ENCODE measurements at regions of chr1 and their contacts with region 1.

Region 1: GRCh38 chr1:9101510-9102146 is 27.3 kb downstream of the GPR157 start:
- DNase-seq: peak; percentile 86
- CTCF ChIP-seq: peak; percentile 62

Region 2: GRCh38 chr1:8780405-8780804 is 321.2 kb before region 1 on chr1:
- in situ Hi-C with region 1: no loop called
- DNase-seq: peak; percentile 21
- CTCF ChIP-seq: no peak

Region 3: DNA sequence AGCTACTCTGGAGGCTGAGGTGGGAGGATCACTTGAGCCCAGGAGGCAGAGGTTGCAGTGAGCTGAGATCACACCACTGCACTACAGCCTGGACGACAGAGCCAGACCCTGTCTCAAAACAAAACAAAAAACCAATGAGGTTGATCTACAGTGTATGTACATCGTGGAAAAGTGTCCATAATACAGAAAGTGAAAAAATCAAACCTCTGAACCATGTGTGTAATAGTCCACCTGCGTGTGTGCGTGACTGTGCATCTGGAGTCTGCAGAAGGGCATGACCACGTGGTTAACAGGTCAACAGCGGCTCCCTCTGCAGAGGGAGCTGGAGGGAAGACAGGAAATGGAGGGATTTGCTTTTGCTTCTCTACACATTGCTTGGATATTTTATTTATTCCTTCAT is 190.7 kb before region 1 on chr1:
- in situ Hi-C with region 1: loop called (anchors 10 kb)
- DNase-seq: no peak
- CTCF ChIP-seq: no peak

Region 4: DNA sequence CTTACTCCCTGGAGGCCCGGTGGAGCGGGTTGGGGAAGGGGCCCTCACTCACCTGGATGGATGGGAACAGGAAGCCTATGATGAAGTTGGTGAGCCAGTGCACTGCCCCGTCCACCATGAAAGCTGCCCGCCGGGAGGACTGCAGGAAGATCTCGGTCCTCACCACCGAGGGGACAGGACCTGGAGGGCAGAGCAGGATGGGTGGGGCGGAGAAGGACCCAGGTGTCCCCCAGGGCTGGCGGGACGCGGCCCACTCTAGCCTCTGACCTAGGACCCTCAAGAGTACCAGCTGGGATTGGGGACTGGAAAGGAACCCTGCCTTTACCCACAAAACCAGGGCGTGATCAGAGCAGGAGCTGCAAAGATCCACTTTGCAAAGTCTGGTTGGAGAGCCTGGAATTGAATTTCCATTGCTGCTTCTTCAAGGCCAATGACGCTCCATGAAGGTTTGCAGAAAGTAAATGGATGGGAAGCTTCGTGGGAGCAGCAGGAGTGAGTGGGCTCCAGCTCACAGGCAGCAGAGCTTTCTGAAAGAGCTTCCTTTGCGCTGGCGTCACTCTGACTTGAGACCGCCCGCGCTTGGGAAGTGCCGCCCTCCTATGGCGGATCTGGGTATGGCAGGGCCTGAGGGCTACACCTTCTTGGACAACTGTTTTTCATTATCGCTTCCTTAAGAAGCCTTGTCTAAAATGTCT is 96.8 kb before region 1 on chr1:
- in situ Hi-C with region 1: loop called (anchors 5 kb)
- DNase-seq: peak; percentile 93
- CTCF ChIP-seq: peak; percentile 90